ENCODE measurements at regions of chr17 and their contacts with region 1.

Region 1: GRCh38 chr17:69711541-69711940 is 297.0 kb downstream of the MAP2K6 start:
- DNase-seq: no peak
- ATAC-seq: no peak
- H3K4me3 ChIP-seq: no peak overlapping the region
- H3K27ac ChIP-seq: no peak overlapping the region
- H3K4me1 ChIP-seq: no peaks in the 10 kb centered on the region
- H3K27me3 ChIP-seq: no peaks in the 10 kb centered on the region
- CTCF ChIP-seq: no peak
- EP300 ChIP-seq: no peak
- POLR2A ChIP-seq: no peak
- RAD21 ChIP-seq: no peak

Region 2: DNA sequence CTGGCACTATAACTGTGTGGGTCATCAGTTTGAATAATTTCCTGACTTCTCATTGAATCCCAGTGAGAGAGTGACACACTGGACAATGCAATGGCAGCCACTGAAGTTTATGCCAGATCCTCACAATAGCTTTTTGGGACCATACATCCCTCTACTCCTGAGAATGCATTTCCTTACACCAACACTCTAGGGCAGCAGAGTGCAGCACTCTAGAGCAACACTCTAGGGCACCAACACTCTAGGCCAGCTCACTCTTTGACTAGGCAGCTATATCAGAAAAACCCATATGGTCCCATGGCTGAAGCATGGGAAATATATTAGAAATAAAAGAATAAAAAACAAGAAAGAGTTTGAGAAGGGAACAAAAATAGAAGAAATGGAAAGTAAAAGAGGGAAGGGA is 12.2 kb after region 1 on chr17:
- CTCF ChIA-PET with region 1: no interaction called
- POLR2A ChIA-PET with region 1: no interaction called
- in situ Hi-C with region 1: no loop called
- intact Hi-C with region 1: no loop called
- DNase-seq: no peak
- ATAC-seq: no peak
- H3K4me3 ChIP-seq: no peak overlapping the region
- H3K27ac ChIP-seq: no peak overlapping the region
- H3K4me1 ChIP-seq: no peaks in the 10 kb centered on the region
- H3K27me3 ChIP-seq: no peaks in the 10 kb centered on the region
- CTCF ChIP-seq: no peak
- EP300 ChIP-seq: no peak
- POLR2A ChIP-seq: no peak
- RAD21 ChIP-seq: no peak

Region 3: DNA sequence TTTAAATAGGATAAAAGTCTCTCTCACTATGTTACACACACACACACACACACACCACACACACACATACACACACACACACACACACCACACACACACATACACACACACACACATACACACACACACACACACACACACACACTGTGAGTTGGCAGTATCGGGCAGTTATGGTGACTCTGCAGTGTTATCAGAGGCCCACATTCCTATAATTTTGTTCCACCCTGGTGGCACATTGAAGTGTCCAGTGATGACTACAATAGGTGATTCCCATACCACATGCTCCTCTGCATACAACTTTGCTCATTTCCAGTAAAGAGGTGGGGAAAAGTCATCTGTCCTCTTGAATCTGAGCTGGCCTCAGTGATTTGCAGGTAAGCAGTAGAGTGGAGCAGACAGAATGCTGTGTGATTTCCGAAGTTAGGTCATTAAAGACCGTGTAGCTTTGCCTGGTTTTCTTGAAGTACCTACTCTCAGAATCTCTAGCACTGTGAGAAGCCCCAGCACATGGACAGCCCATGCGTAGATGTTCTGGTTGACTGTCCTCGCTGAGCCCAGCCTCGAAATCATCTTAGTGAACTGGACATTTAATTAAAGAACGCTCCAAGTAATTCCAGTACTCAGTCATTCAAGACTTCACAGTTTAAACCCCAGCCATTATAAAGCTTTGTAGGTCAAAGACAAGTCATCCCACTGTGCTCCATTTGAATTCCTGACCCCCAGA is 1572.7 kb after region 1 on chr17:
- CTCF ChIA-PET with region 1: no interaction called
- POLR2A ChIA-PET with region 1: no interaction called
- in situ Hi-C with region 1: no loop called
- intact Hi-C with region 1: loop called (anchors 5 kb)
- DNase-seq: no peak
- ATAC-seq: no peak
- H3K4me3 ChIP-seq: no peak overlapping the region
- H3K27ac ChIP-seq: no peak overlapping the region
- H3K4me1 ChIP-seq: no peaks in the 10 kb centered on the region
- H3K27me3 ChIP-seq: no peaks in the 10 kb centered on the region
- CTCF ChIP-seq: no peak
- EP300 ChIP-seq: no peak
- POLR2A ChIP-seq: no peak
- RAD21 ChIP-seq: no peak

Measured in HepG2 (cell line).